ENCODE measurements at regions of chr14 and their contacts with region 1.

Region 1: DNA sequence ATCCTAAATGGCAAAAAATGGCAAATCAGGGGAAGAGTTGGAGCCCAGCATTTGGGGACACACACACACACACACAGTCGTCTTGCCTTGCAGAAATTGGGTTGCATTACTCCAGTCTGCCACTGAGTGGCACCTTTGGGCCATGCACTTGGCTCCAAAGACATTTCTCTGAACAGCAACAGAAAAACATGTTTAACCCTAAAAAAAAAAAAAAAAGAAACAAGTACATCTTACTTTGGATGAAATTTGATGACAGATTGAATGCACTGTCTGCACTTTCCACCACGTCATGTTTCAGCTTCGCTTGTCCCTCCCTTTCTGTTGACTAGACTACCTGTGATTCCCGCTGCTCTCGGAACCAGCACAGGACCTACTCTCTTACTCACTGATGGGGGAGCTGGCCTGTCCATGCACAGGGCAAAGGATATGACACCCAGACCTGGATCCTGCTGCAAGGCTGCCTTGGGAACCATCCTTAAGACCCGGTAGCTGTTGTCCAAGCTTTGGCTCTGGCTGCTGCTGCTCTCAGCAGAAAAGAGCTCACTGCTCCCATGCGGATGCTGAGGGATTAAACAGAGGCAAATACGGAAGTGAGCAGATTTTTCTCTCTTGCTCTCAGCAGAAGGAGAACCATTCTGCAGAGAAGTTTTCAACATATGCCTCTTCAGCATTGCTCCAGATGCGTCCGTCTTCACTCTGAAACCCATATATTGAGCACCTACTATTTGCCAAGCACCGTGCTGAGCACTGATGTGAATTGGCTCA is 376.8 kb downstream of the DPF3 start:
- DNase-seq: peak; percentile 94
- H3K4me3 Mint-ChIP-seq: peak overlapping the region; percentile 18
- H3K27ac Mint-ChIP-seq: peak overlapping the region; percentile 6
- H3K4me1 Mint-ChIP-seq: peaks cover 78% of the 10 kb centered on the region
- H3K27me3 Mint-ChIP-seq: peaks cover under 1% of the 10 kb centered on the region

Region 2: GRCh38 chr14:72535485-72535884 is 18.4 kb after region 1 on chr14:
- intact Hi-C with region 1: loop called (anchors 2 kb)
- DNase-seq: peak; percentile 68
- H3K4me3 Mint-ChIP-seq: peak overlapping the region; percentile 34
- H3K27ac Mint-ChIP-seq: peak overlapping the region; percentile 27
- H3K4me1 Mint-ChIP-seq: peaks cover 58% of the 10 kb centered on the region
- H3K27me3 Mint-ChIP-seq: peaks cover 16% of the 10 kb centered on the region

Region 3: GRCh38 chr14:72665259-72665658 is 148.1 kb after region 1 on chr14:
- intact Hi-C with region 1: loop called (anchors 5 kb)
- DNase-seq: no peak
- H3K4me3 Mint-ChIP-seq: no peak overlapping the region
- H3K27ac Mint-ChIP-seq: no peak overlapping the region
- H3K4me1 Mint-ChIP-seq: peaks cover 11% of the 10 kb centered on the region
- H3K27me3 Mint-ChIP-seq: peaks cover 10% of the 10 kb centered on the region

Region 4: GRCh38 chr14:72812292-72812911 is 295.3 kb after region 1 on chr14:
- intact Hi-C with region 1: loop called (anchors 10 kb)
- DNase-seq: no peak
- H3K4me3 Mint-ChIP-seq: no peak overlapping the region
- H3K27ac Mint-ChIP-seq: no peak overlapping the region
- H3K4me1 Mint-ChIP-seq: peaks cover 33% of the 10 kb centered on the region
- H3K27me3 Mint-ChIP-seq: no peaks in the 10 kb centered on the region

Region 5: GRCh38 chr14:72904840-72905561 is 387.9 kb after region 1 on chr14:
- intact Hi-C with region 1: loop called (anchors 1 kb)
- DNase-seq: peak; percentile 89
- H3K4me3 Mint-ChIP-seq: no peak overlapping the region
- H3K27ac Mint-ChIP-seq: no peak overlapping the region
- H3K4me1 Mint-ChIP-seq: peaks cover 17% of the 10 kb centered on the region
- H3K27me3 Mint-ChIP-seq: peaks cover 28% of the 10 kb centered on the region

Region 6: DNA sequence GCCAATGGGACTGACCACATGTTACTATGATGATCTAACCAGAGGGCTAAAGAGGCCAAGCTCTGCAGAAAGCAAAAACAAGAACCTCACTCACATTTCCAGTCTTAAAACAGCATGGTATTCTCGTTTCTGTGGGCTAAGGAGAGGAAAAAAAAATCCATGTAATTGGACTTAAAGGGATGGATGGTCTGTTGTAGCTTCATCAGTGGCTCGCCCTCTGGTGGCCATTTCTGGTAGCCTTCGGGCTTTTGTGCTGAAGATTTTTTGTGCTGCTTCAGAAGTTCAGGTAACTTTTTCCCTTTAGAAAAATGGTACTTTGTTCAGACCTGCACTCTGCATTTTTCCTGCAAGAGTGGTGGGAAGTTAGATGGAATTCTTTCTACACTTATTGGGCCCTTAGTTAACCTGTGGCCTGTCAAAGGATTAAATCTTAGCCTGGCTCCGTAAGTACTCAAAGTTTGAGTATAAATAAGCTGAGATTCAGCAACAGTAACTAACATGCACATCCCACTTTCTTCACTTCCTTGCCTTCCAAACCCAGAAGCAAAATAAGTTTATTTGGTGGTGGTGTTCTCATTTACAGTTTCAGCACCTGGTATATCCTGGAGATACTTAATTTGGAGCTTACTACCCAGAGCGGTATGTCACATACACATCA is 431.5 kb after region 1 on chr14:
- intact Hi-C with region 1: loop called (anchors 1 kb)
- DNase-seq: peak; percentile 90
- H3K4me3 Mint-ChIP-seq: no peak overlapping the region
- H3K27ac Mint-ChIP-seq: no peak overlapping the region
- H3K4me1 Mint-ChIP-seq: peaks cover 6% of the 10 kb centered on the region
- H3K27me3 Mint-ChIP-seq: no peaks in the 10 kb centered on the region

Region 7: GRCh38 chr14:73261520-73262426 is 744.7 kb after region 1 on chr14:
- intact Hi-C with region 1: no loop called
- DNase-seq: no peak
- H3K4me3 Mint-ChIP-seq: no peak overlapping the region
- H3K27ac Mint-ChIP-seq: no peak overlapping the region
- H3K4me1 Mint-ChIP-seq: peaks cover 4% of the 10 kb centered on the region
- H3K27me3 Mint-ChIP-seq: peaks cover 2% of the 10 kb centered on the region

Region 8: GRCh38 chr14:73463411-73463810 is 946.3 kb after region 1 on chr14:
- intact Hi-C with region 1: loop called (anchors 10 kb)
- DNase-seq: peak; percentile 79
- H3K4me3 Mint-ChIP-seq: peak overlapping the region; percentile 70
- H3K27ac Mint-ChIP-seq: peak overlapping the region; percentile 94
- H3K4me1 Mint-ChIP-seq: peaks cover 71% of the 10 kb centered on the region
- H3K27me3 Mint-ChIP-seq: no peaks in the 10 kb centered on the region